ENCODE measurements at regions of chr18 and their contacts with region 1.

Region 1: GRCh38 chr18:12657684-12658425 is at the start of gene SPIRE1:
- DNase-seq: peak; percentile 38
- H3K4me3 Mint-ChIP-seq: peak within 1 kb of the TSS; percentile 84
- H3K27ac Mint-ChIP-seq: peak within 1 kb of the TSS; percentile 47
- H3K4me1 Mint-ChIP-seq: peaks cover 35% of the 10 kb centered on the region
- H3K27me3 Mint-ChIP-seq: peaks cover 27% of the 10 kb centered on the region
- total RNA-seq, gene SPIRE1: 8.8 and 10.9 TPM in 2 replicates

Region 2: DNA sequence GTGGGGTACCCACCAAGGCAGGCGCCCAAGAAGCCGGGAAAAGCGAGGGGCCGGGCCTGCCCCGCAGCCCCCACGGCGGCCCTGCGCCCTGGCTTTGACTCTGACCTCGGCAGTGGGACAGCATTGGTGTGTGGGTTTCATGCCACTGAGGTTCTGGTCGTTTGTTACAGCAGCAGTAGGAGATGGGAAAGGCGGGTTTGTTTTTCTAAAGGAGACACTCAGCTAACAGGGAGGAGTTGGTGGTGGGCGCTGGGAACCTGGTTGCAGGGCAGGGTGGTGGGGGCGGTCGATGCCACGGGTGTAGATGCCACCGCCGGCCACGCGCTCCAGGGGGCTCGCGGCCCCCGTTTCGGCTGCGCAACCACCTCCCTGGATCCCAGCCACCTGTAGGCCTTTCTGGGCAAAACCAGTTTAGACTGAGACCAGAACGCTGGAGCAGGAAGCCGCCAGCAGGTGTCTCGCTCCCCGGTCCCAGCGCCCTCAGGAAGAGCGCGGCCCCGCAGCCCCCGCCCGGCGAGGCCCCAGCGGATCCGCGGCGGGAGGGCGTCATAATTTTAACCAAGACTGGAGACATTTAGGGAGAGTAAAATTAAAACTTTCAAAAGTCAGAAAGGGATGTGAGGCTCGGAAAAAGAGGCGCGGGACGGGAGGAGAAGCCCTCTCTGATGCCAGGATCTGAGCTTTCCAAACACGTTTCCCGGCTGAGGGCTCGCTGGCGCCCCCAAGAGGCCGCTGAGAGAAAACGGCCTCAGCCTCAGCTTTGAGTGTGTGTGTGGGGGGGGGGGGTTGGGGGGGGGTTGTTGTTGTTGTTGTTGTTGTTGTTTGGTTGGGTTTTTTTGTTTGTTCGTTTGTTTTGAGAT is 386.2 kb before region 1 on chr18:
- intact Hi-C with region 1: loop called (anchors 2 kb)
- DNase-seq: peak; percentile 39
- H3K4me3 Mint-ChIP-seq: peak overlapping the region; percentile 45
- H3K27ac Mint-ChIP-seq: no peak overlapping the region
- H3K4me1 Mint-ChIP-seq: no peaks in the 10 kb centered on the region
- H3K27me3 Mint-ChIP-seq: peaks cover 7% of the 10 kb centered on the region

Region 3: DNA sequence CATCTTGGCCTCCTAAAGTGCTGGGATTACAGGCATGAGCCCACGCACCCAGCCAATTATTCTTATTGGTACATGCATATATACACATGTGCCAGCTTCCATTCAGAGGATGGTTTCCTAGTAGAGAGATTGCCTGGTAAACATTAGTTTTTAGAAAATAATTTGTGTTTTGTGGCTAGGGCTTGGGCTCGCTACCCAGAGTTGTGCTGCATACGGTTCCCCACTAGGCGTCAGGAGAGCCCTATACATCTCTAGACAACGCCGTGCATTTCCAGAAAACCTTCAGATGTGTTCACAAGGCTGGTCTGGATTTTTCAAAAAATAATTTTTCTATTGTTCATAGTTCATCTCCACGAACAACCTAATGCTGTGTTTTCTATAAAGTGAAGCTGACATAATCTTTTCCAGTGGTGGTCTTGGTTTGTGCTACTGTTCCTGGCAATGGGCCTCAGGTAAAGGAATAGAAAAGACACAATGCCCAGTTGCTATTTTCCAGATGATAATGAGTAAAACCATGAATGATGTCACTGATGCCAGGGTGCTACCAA is 266.2 kb before region 1 on chr18:
- intact Hi-C with region 1: loop called (anchors 1 kb)
- DNase-seq: peak; percentile 26
- H3K4me3 Mint-ChIP-seq: no peak overlapping the region
- H3K27ac Mint-ChIP-seq: no peak overlapping the region
- H3K4me1 Mint-ChIP-seq: peaks cover 5% of the 10 kb centered on the region
- H3K27me3 Mint-ChIP-seq: peaks cover 4% of the 10 kb centered on the region

Region 4: DNA sequence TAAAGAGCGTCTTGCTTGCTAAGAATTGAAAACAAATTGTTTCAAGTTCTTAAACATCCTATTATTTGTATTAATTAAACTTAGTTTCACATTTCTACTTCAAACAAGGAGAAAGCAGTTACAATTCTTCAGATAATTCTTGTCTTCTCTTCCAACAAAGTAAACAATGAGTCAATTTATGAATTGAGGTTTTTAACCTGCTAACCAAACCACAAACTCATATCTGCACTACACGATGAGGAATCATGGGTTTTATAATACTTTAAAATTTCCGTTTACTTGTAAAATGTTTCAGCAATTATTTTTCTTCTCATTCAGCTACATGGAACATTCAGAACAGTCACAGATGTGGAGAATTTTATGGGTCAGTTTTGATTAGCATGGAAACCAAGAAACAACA is 114.2 kb before region 1 on chr18:
- intact Hi-C with region 1: loop called (anchors 2 kb)
- DNase-seq: no peak
- H3K4me3 Mint-ChIP-seq: no peak overlapping the region
- H3K27ac Mint-ChIP-seq: no peak overlapping the region
- H3K4me1 Mint-ChIP-seq: peaks cover 9% of the 10 kb centered on the region
- H3K27me3 Mint-ChIP-seq: peaks cover 19% of the 10 kb centered on the region

Region 5: GRCh38 chr18:12702221-12703095 is 44.6 kb after region 1 on chr18 and contains the starts of genes CEP76 and PSMG2:
- intact Hi-C with region 1: loop called (anchors 2 kb)
- DNase-seq: peak; percentile 80
- H3K4me3 Mint-ChIP-seq: peak within 1 kb of the TSS; percentile 97
- H3K27ac Mint-ChIP-seq: peak within 1 kb of the TSS; percentile 92
- H3K4me1 Mint-ChIP-seq: peaks cover 54% of the 10 kb centered on the region
- H3K27me3 Mint-ChIP-seq: no peaks in the 10 kb centered on the region
- total RNA-seq, gene CEP76: 16.1 and 17.5 TPM in 2 replicates
- total RNA-seq, gene PSMG2: 113 and 118 TPM in 2 replicates

Measured in activated T-helper 1 cell treated with anti-CD3 and anti-CD28 coated beads, Interleukin-12 subunit alpha, Interleukin-12 subunit beta, Interleukin-2, Interleukin-4 antibody, amounts not matched to agents 30 ng/mL and 10 ng/mL and 1 ng/mL, durations not matched to agents 14 hours and 24 hours and 36 hours (primary cell).